Cardiac septum (tissue), 1 donor: ENCODE measurements at regions of chr10 and their contacts with region 1.

Region 1: DNA sequence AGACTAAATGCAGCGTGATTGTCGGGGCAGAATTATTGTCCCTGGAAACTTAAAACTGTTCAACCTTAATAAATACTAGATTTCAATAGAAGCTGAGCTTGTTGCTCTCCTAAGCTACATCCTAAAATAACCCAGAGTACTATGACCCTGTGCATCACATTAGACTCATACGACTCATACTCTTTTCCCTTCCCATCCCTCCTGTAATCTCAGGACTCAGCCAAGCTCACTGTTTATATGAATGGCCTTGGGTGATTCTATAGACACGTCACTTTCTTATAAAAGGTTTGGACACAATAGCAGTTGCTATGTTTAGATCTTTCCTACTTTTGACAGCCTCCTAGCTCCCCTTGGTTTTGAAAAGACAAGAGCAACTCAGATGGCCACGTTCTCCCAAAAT is 17.2 kb downstream of the TCF7L2 start:
- DNase-seq: no peak

Region 2: GRCh38 chr10:113020838-113021237 is 53.6 kb after region 1 on chr10:
- intact Hi-C with region 1: loop called (anchors 5 kb)
- DNase-seq: no peak